ENCODE measurements at regions of chr3 and their contacts with region 1.

Region 1: GRCh38 chr3:45499529-45499928 is 95.0 kb upstream of the LIMD1 start:
- DNase-seq: no peak
- H3K4me3 ChIP-seq: no peak overlapping the region
- H3K27ac ChIP-seq: no peak overlapping the region
- H3K4me1 ChIP-seq: no peaks in the 10 kb centered on the region
- H3K27me3 ChIP-seq: no peaks in the 10 kb centered on the region
- CTCF ChIP-seq: peak; percentile 25 to 63 (median 63)
- POLR2A ChIP-seq: no peak

Region 2: DNA sequence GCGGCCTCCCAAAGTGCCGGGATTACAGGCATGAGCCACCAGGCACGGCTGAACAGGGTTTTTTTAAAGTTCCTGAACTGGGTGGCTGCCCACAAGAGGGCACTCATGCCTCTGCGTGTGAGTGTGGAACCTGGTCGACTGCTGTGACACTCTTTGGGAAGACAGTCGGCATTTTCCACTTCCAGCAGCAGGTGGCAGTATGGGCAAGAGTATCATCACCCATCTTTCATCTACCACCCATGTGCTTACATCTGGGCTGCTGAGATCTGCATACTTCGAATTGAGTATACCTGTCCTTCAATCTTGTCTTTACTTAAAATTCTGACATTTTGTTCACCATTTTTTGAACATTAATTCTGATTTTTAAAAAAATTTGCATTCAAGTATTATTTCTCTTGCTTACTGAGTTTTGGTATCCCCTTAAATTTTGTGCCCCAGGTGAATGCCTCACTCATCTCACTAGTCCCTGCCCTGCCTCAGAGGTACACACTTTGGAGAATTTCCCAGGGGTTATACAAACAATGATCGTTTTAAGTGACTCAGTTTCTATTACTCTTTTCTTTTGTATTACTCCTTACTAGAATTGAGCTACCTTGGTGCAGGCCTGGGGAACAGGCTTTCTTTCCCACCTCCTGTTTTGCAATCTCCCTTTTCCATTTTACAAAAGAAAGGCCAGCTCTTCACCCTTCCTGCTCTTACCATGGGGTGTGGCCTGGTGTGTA is 461.6 kb before region 1 on chr3:
- intact Hi-C with region 1: loop called (anchors 10 kb)
- DNase-seq: peak; percentile 90 to 93
- H3K4me3 ChIP-seq: no peak overlapping the region
- H3K27ac ChIP-seq: no peak overlapping the region
- H3K4me1 ChIP-seq: no peaks in the 10 kb centered on the region
- H3K27me3 ChIP-seq: peaks cover 0 to 7% of the 10 kb centered on the region in 2 donors
- CTCF ChIP-seq: peak; percentile 96 to 98 (median 97)
- POLR2A ChIP-seq: no peak